GM10248 (cell line): ENCODE measurements at regions of chr2 and their contacts with region 1.

Region 1: DNA sequence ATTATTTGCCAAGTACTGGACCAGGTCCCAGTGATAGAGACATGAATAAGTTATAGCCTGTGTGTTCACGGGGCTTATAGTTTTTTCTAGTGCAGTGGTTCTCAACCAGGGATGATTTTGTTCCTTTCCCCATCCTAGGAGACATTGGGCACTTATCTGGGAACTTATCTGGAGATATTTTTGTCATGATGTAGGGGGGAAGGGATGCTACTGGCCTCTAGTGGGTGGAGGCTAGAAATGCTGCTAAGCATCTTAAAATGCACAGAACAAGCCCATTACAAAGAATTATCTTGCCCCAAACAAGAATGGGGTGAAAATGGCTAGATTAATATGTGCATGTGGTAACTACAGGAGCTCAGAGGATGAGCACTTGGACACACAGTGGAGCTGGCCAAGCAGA is 75.2 kb downstream of the KLHL29 start:
- DNase-seq: no peak
- CTCF ChIP-seq: peak; percentile 61

Region 2: DNA sequence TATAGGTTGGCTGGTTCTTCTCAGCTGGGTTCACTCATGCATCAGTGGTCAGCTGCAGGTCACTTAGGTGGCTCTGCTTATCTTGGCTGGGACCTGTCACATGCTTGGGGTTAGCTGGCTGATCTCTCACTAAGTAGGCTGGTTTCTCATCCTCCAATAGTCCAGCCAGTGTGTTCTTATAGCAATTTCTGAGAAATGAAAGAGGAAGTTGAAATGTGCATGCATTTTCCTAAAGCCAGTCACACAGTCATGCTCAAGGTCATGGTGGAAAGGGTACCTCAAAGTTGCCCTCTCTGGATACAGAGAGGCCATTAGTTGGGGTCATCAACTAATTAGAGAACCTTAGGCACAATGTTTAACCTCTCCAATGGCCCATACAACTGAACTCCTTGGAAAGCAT is 10.8 kb before region 1 on chr2:
- CTCF ChIA-PET with region 1: interaction called, 11 read pairs
- POLR2A ChIA-PET with region 1: no interaction called
- DNase-seq: peak; percentile 61
- CTCF ChIP-seq: no peak

Region 3: GRCh38 chr2:23478087-23478911 is 18.1 kb after region 1 on chr2:
- CTCF ChIA-PET with region 1: interaction called, 15 read pairs
- POLR2A ChIA-PET with region 1: no interaction called
- DNase-seq: no peak
- CTCF ChIP-seq: no peak